ENCODE measurements at regions of chr17 and their contacts with region 1.

Region 1: DNA sequence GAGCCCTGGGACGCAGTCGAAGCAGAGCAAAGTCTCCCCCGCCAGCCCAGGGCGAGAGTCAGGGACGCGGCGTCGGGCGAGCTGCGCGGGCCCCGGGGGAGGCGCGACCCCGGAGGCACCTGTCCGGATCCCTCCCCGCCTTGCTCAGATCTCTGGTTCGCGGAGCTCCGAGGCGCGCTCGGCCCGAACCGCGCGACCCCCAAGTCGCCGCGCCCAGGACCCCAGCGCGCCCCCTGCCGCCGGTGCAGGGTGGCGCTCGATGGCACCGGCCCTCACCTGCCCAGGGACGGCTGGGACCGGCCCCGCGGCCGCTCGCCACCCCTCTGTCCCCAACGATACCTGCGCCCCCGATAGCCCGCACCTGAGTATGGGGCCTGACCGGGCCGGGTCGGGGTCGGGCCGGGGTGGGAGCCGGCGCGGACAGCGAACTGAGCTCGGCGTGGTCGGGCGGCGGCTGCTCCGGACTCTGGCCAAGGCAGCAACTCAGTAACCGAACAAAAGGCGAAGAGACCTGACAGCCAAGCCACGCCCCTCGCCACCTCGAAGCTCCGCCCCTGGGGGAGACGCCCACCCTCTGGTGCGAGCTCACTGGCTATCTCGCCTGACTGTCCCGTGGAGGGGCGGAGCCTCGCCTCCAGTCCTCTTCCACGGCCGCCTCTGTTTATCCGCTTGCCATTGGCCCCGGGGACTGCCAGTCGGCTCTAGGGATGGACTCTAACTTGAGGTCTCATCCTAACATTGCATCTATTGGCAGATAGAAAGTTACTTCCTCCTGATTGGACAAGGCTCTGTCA is at the start of gene JUP:
- DNase-seq: peak; percentile 100
- H3K4me3 ChIP-seq: peak within 1 kb of the TSS; percentile 14 to 98 (median 52)
- H3K27ac ChIP-seq: peak within 1 kb of the TSS; percentile 19
- H3K4me1 ChIP-seq: no peaks in the 10 kb centered on the region
- H3K27me3 ChIP-seq: peaks cover 0 to 7% of the 10 kb centered on the region in 2 experiments
- CTCF ChIP-seq: peak; percentile 66 to 81
- POLR2A ChIP-seq: peak; percentile 81
- total RNA-seq, gene JUP: 170 and 171 TPM in 2 replicates

Region 2: GRCh38 chr17:41665566-41666236 is 120.7 kb before region 1 on chr17:
- CTCF ChIA-PET with region 1: no interaction called
- POLR2A ChIA-PET with region 1: no interaction called
- dilution Hi-C with region 1: no loop called
- intact Hi-C with region 1: no loop called
- DNase-seq: peak; percentile 83
- H3K4me3 ChIP-seq: peak overlapping the region in 2 of 3 experiments; percentile 13 to 32
- H3K27ac ChIP-seq: peak overlapping the region; percentile 49
- H3K4me1 ChIP-seq: peaks cover 23% of the 10 kb centered on the region
- H3K27me3 ChIP-seq: no peaks in the 10 kb centered on the region
- CTCF ChIP-seq: peak; percentile 96 to 99
- POLR2A ChIP-seq: no peak

Region 3: DNA sequence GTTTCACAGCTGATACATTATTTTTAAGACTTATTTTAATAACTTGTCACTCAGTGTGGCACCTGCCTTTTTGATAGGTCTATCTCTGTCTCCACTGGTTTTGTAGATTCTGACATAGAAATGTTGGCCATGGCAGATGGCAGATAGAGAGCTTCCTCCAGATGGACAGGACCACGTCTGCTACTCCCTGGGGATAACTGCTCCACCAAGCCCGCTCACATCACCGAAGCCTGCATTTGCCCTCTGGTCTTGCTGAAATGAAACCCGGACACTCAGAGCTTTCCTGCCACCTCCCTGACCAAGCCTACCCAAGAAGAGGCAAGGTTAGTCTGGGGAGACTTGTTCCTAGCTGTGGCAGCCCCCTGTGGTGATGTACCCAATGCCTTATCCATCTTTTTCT is 35.6 kb before region 1 on chr17:
- CTCF ChIA-PET with region 1: interaction called, 27 read pairs
- POLR2A ChIA-PET with region 1: interaction called, 4 read pairs
- dilution Hi-C with region 1: no loop called
- intact Hi-C with region 1: no loop called
- DNase-seq: no peak
- H3K4me3 ChIP-seq: no peak overlapping the region
- H3K27ac ChIP-seq: no peak overlapping the region
- H3K4me1 ChIP-seq: no peaks in the 10 kb centered on the region
- H3K27me3 ChIP-seq: peaks cover 0 to under 1% of the 10 kb centered on the region in 2 experiments
- CTCF ChIP-seq: no peak
- POLR2A ChIP-seq: no peak

Region 4: DNA sequence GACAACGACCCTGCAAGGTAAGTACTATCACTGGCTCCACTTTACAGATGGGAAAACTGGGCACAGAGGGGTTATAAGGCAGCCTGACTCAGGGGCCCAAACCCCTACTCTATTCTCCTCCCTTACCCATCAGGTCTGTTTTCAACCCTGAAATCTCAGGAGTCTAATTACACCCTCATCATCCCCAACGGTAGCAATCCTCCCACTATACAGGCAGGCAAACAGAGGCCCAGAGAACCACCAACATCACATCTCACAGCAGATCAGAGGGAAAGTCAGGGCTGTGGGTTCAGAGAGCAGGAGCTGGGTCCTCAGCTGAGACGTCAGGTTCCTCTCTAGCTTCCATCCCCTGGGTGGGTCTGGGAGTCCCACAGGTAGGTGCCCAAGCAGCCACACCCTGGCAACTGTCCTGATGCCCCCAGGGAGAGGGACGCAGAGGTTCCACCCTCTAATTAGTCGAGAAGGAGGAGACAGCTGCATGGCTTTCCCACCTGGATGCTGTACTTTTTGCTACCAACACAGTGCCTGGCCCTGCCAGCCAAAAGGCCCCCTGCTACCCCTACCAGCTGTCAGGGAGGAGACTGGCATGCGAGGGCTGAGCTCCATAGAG is 16.3 kb before region 1 on chr17:
- CTCF ChIA-PET with region 1: interaction called, 169 read pairs
- POLR2A ChIA-PET with region 1: interaction called, 31 read pairs
- dilution Hi-C with region 1: no loop called
- intact Hi-C with region 1: loop called (anchors 2 kb)
- DNase-seq: no peak
- H3K4me3 ChIP-seq: no peak overlapping the region
- H3K27ac ChIP-seq: no peak overlapping the region
- H3K4me1 ChIP-seq: peaks cover 18% of the 10 kb centered on the region
- H3K27me3 ChIP-seq: no peaks in the 10 kb centered on the region
- CTCF ChIP-seq: no peak
- POLR2A ChIP-seq: no peak

Region 5: GRCh38 chr17:41835800-41836549 is 49.6 kb after region 1 on chr17 and contains the start of gene NT5C3B:
- CTCF ChIA-PET with region 1: no interaction called
- POLR2A ChIA-PET with region 1: no interaction called
- dilution Hi-C with region 1: no loop called
- intact Hi-C with region 1: no loop called
- DNase-seq: peak; percentile 44
- H3K4me3 ChIP-seq: peak within 1 kb of the TSS; percentile 62 to 80 (median 71)
- H3K27ac ChIP-seq: no peak within 1 kb of the TSS
- H3K4me1 ChIP-seq: peaks cover 5% of the 10 kb centered on the region
- H3K27me3 ChIP-seq: no peaks in the 10 kb centered on the region
- CTCF ChIP-seq: no peak
- POLR2A ChIP-seq: no peak
- total RNA-seq, gene NT5C3B: 57.4 and 67.3 TPM in 2 replicates